Mammary epithelial cell (primary cell): ENCODE measurements at regions of chr11 and their contacts with region 1.

Region 1: DNA sequence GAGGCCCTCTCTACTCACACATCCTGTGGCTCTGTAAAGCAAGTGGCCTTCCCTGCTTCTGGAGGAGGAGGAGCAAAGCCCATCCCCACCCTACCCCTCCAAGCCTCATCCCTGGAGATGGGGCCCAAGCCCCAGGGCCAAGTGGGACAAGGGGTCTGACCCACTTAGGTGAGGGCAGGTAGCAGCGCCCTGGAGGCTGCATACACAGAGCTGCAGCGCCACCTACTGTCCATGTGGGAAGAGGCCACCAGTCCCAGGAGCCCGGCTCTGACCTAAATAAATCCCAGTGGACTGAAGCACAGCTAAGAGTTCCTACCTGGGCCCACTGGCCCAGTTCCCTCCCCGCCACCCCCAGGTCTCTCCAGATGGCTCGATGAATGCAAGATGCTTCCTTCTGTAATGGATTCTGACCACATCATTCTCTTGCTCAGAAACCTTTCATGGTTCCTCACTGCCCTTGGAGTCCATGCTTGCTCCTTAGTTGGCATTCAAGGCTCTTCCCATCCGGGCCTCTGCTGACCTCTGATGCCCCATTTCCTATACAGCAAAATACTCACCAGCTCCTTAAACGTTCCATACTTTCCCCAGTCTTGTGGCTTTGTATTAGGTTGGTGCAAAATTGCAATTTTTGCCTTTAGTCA is 62.1 kb downstream of the THAP12 start:
- DNase-seq: peak; percentile 46
- H3K4me3 ChIP-seq: no peak overlapping the region
- H3K27ac ChIP-seq: no peak overlapping the region
- H3K4me1 ChIP-seq: peaks cover 17% of the 10 kb centered on the region
- H3K27me3 ChIP-seq: no peaks in the 10 kb centered on the region
- CTCF ChIP-seq: peak; percentile 84 to 97

Region 2: DNA sequence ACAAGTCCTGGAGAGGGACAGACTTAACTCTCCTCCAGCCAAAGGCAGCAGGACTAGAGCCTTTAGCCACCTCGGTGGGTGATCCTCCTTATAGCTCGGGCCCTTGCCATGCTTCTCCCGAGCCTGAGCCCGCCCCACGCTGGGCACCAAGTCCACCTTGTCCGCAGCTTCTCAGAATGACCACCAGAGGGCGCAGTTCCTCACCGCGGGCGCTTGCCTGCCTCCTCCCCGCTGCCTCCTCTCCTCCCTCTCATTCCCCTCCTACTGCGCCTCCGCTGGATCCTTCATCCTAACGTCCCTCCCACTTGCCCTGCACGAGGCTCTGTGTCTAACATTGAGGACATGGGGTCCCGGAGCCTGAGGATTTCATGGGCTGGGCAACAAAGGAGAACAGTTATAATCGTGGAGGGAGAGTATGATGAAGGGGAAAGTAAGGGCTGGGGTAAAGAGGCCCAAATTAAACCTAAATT is 612.6 kb before region 1 on chr11:
- CTCF ChIA-PET with region 1: no interaction called
- dilution Hi-C with region 1: no loop called
- in situ Hi-C with region 1: no loop called
- intact Hi-C with region 1: loop called (anchors 5 kb)
- DNase-seq: peak; percentile 55
- H3K4me3 ChIP-seq: no peak overlapping the region
- H3K27ac ChIP-seq: no peak overlapping the region
- H3K4me1 ChIP-seq: no peaks in the 10 kb centered on the region
- H3K27me3 ChIP-seq: no peaks in the 10 kb centered on the region
- CTCF ChIP-seq: peak; percentile 81 to 92

Region 3: DNA sequence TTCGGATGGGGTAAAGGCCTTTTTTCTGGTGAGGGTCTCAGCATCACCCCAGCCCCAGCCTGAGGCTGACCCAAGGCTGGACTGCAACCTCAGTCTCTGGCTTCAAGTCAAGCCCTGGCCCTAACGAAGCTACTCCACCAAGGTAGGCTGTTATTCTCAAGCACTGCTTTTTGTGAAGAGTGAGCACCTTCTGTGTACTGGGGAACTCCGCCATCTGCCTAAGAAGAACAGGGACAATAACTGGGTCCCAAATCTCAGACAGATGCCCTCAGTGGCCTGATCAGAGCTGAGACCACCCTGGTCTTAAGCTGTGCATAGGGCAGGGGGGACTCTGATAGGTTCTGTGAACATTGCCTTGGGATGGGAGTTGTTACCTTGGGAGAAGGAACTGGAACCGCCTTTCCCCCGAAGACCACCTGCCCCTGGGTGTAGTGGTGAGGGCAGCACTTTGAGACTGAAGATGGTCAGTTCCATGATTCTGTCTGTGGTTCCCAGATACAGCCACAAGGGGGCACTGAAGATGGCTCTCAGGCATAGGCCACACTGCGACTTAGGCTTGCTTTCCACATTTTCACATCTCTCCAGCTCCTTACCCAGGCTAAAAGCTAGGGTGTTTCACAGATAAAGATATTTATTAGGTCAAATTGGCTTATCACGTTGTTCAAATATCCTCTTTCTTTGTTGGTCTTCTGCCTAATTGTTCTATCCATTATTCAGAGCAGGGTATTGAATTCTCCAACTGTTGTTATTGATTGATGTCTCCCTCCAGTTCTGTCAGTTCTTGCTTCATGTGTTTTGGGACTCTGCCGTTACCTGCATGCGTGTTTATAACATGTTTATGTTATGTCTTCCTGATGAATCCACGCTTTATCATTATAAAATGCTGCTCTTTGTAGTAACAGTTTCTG is 515.7 kb before region 1 on chr11:
- CTCF ChIA-PET with region 1: interaction called, 3 read pairs
- dilution Hi-C with region 1: no loop called
- in situ Hi-C with region 1: no loop called
- intact Hi-C with region 1: loop called (anchors 1 kb)
- DNase-seq: peak; percentile 45
- H3K4me3 ChIP-seq: no peak overlapping the region
- H3K27ac ChIP-seq: no peak overlapping the region
- H3K4me1 ChIP-seq: no peaks in the 10 kb centered on the region
- H3K27me3 ChIP-seq: no peaks in the 10 kb centered on the region
- CTCF ChIP-seq: peak; percentile 90 to 92

Region 4: DNA sequence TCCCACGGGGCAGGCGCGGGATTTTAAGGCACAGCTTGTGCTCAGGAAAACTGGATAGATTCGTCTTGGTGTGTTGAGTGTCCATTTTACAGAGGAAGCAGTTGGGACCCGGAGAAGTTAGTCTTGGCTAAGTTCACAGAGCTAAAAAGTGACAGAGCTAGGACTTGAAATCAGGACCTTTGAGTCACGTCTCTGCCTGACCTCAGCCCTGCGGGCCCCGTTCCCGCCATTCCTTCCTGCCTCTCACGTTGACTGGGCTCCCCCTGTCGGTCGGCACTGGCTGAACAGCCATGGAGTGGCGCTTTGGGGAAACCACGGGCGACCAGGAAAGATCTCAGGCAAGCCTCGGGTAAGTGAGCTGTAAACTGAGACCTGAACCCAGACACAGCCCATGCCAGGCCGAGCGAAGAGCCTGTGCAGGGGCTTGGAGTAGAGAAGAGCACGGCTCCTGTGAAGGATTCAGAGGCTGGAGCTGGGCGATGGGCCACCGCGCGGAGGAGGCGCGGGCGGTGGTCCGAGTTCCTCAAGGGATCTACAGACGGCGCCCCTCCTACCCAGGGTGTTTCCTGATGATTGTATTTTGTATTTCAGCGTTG is 166.7 kb before region 1 on chr11:
- CTCF ChIA-PET with region 1: no interaction called
- dilution Hi-C with region 1: no loop called
- in situ Hi-C with region 1: no loop called
- intact Hi-C with region 1: loop called (anchors 1 kb)
- DNase-seq: peak; percentile 66
- H3K4me3 ChIP-seq: peak overlapping the region in 2 of 3 experiments; percentile 35 to 40
- H3K27ac ChIP-seq: no peak overlapping the region
- H3K4me1 ChIP-seq: peaks cover 3% of the 10 kb centered on the region
- H3K27me3 ChIP-seq: no peaks in the 10 kb centered on the region
- CTCF ChIP-seq: peak; percentile 93 to 95

Region 5: GRCh38 chr11:76235233-76236091 is 83.4 kb before region 1 on chr11:
- CTCF ChIA-PET with region 1: no interaction called
- dilution Hi-C with region 1: no loop called
- in situ Hi-C with region 1: no loop called
- intact Hi-C with region 1: loop called (anchors 1 kb)
- DNase-seq: peak; percentile 85
- H3K4me3 ChIP-seq: peak overlapping the region; percentile 59 to 88 (median 78)
- H3K27ac ChIP-seq: peak overlapping the region; percentile 11
- H3K4me1 ChIP-seq: peaks cover 16% of the 10 kb centered on the region
- H3K27me3 ChIP-seq: no peaks in the 10 kb centered on the region
- CTCF ChIP-seq: no peak

Region 6: GRCh38 chr11:76444384-76445123 is 125.7 kb after region 1 on chr11 and contains the start of gene EMSY:
- CTCF ChIA-PET with region 1: no interaction called
- dilution Hi-C with region 1: no loop called
- in situ Hi-C with region 1: no loop called
- intact Hi-C with region 1: no loop called
- DNase-seq: peak; percentile 99
- H3K4me3 ChIP-seq: peak within 1 kb of the TSS; percentile 81 to 96 (median 83)
- H3K27ac ChIP-seq: peak within 1 kb of the TSS; percentile 98
- H3K4me1 ChIP-seq: peaks cover 10% of the 10 kb centered on the region
- H3K27me3 ChIP-seq: no peaks in the 10 kb centered on the region
- CTCF ChIP-seq: no peak
- total RNA-seq, gene EMSY: 16.1 to 19.8 TPM

Region 7: DNA sequence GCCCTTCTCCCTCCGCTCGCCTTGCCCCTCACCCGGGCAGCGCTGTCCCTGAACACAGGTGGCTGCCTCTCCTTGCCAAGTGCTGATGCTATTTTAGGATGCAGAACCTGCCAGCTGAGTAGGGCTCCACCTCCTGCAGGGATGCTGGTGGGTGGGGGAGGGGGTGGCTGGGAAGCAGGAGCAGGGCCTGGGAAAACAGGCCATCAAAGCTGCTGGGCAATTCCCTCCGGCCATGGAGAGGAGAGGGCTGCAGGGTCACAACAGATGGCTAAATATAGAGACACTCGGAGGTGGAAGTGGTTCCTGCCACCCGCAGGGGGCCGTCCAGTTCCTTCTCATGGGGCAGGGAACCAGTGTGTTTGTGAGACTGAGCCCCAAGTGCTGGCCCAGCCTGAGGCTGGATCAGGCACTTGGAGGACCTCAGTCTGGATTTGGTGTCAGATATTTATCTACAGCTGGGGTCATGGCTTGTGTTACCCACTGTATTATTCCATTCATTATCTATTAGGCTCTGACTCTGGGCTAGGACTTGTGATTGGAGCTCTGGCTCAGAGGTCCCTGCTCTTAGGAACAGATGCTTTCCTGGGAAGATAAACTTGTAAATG is 292.1 kb after region 1 on chr11:
- CTCF ChIA-PET with region 1: no interaction called
- dilution Hi-C with region 1: no loop called
- in situ Hi-C with region 1: no loop called
- intact Hi-C with region 1: no loop called
- DNase-seq: no peak
- H3K4me3 ChIP-seq: no peak overlapping the region
- H3K27ac ChIP-seq: no peak overlapping the region
- H3K4me1 ChIP-seq: no peaks in the 10 kb centered on the region
- H3K27me3 ChIP-seq: peaks cover 2% of the 10 kb centered on the region
- CTCF ChIP-seq: no peak

Region 8: DNA sequence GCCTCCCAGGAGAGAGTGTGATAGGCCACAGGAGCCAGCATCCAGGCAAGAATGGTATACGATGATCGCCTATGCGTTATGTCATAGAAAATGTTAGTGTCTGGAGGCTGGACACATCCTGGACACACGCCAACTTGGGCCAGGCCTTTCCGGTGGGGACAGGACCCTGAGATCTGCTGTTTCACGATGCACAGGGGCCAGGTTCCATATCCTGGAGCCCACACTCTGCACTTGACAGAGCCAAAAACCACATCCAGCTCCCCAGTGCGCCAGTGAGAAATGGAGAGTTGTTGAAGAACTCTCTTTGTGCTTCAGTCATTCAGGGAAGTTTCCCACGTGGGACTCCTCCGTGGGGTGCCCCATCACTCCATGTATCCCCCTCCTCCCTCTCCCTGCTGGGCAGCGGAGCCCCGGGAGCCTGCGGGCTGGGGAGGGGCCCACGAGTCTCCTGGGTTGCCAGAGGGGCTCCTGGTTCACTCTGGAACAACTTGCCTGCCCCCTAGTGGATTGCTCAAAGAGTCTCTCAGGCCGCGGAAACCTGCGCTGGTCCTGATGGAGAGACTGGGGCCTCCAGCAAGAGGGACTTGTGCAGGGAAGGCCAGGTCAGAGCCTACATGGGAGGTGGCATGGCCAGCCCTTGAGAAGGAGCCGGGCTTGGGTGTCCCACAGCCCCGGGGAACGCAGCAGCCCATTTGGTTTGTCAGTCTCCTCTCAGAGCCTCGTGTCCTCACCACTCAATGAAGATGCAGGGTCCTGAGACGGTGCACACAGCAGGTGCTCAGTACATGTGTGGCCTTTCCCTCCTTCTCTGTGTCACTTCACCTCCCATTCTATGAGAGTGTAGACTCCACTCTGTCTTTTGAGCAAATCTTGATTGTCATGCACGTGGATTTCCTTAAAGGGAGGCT is 361.9 kb after region 1 on chr11:
- CTCF ChIA-PET with region 1: interaction called, 3 read pairs
- dilution Hi-C with region 1: no loop called
- in situ Hi-C with region 1: no loop called
- intact Hi-C with region 1: loop called (anchors 2 kb)
- DNase-seq: peak; percentile 25
- H3K4me3 ChIP-seq: no peak overlapping the region
- H3K27ac ChIP-seq: no peak overlapping the region
- H3K4me1 ChIP-seq: no peaks in the 10 kb centered on the region
- H3K27me3 ChIP-seq: no peaks in the 10 kb centered on the region
- CTCF ChIP-seq: peak; percentile 58 to 89